Prostate gland (tissue), 2 donors: ENCODE measurements at regions of chr19 and their contacts with region 1.

Region 1: GRCh38 chr19:56121180-56122167 is at the start of gene ZNF787:
- DNase-seq: peak; percentile 98
- H3K4me3 ChIP-seq: peak within 1 kb of the TSS; percentile 69 to 95
- H3K27ac ChIP-seq: peak within 1 kb of the TSS; percentile 92 to 97
- H3K4me1 ChIP-seq: peaks cover 10% of the 10 kb centered on the region
- H3K27me3 ChIP-seq: no peaks in the 10 kb centered on the region
- CTCF ChIP-seq: peak in 2 of 4 experiments; percentile 23 to 32
- POLR2A ChIP-seq: peak; percentile 51
- total RNA-seq, gene ZNF787: 28.2 to 47.5 TPM

Region 2: GRCh38 chr19:55877211-55877610 is 244.3 kb before region 1 on chr19:
- intact Hi-C with region 1: no loop called
- DNase-seq: no peak
- H3K4me3 ChIP-seq: no peak overlapping the region
- H3K27ac ChIP-seq: no peak overlapping the region
- H3K4me1 ChIP-seq: no peaks in the 10 kb centered on the region
- H3K27me3 ChIP-seq: no peaks in the 10 kb centered on the region
- CTCF ChIP-seq: no peak
- POLR2A ChIP-seq: no peak

Region 3: DNA sequence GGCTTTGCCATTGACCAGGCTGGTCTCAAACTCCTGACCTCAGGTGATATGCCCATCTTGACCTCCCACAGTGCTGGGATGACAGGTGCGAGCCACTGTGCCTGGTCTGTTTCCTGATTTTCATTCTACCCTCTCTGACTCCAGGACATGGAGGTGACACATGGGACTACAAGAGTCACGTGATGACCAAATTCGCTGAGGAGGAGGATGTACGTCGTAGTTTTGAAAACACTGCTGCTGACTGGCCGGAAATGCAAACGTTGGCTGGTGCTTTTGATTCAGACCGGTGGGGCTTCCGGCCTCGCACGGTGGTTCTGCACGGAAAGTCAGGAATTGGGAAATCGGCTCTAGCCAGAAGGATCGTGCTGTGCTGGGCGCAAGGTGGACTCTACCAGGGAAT is 94.7 kb before region 1 on chr19:
- intact Hi-C with region 1: no loop called
- DNase-seq: no peak
- H3K4me3 ChIP-seq: no peak overlapping the region
- H3K27ac ChIP-seq: no peak overlapping the region
- H3K4me1 ChIP-seq: no peaks in the 10 kb centered on the region
- H3K27me3 ChIP-seq: no peaks in the 10 kb centered on the region
- CTCF ChIP-seq: no peak
- POLR2A ChIP-seq: no peak

Region 4: DNA sequence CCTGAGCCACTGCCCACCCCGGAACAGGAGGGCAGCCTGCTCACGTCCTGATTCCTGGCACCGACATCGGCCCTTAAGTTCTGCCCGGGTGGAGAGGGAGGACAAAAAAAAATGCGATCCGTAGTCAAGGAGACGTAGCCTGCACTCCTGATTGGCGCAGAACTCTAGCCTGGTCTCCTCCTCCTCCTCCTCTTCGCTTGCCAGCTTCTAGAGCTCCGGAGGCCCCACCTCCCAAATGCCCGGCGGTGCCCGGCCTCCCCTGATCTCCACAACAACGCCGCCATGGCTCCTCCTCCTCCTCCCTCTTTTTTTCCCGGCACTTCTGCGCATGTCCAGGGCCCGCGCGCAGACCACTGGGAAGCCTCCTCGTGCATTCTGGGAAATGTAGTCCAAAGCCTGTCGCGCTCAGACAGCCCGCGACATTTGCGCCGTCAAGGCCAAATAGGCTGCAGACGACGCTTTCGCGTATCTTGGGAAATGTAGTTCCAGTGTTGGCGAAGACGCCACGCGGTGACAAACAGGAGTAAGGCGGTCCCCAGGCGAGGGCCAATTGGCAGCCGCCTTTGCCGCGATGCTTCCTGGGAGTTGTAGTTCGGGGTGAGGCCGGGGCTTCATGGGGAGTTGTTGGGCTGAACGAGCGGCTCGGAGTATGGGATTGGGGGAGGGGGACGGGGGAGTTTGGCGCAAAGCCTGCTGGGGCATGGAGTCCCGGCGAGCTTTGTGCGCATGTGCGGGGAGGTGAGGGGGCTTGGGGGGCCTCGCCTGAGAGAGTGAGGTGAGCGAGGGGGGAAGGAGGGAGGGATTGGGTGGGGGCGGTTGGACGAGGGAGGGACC is 19.3 kb after region 1 on chr19 and contains the start of gene ZNF444:
- intact Hi-C with region 1: loop called (anchors 2 kb)
- DNase-seq: peak; percentile 99
- H3K4me3 ChIP-seq: peak within 1 kb of the TSS; percentile 39 to 57
- H3K27ac ChIP-seq: peak within 1 kb of the TSS; percentile 91 to 96
- H3K4me1 ChIP-seq: peaks cover 22% of the 10 kb centered on the region
- H3K27me3 ChIP-seq: no peaks in the 10 kb centered on the region
- CTCF ChIP-seq: peak in 2 of 4 experiments; percentile 15 to 18
- POLR2A ChIP-seq: peak; percentile 65
- total RNA-seq, gene ZNF444: 62.0 to 105 TPM

Region 5: DNA sequence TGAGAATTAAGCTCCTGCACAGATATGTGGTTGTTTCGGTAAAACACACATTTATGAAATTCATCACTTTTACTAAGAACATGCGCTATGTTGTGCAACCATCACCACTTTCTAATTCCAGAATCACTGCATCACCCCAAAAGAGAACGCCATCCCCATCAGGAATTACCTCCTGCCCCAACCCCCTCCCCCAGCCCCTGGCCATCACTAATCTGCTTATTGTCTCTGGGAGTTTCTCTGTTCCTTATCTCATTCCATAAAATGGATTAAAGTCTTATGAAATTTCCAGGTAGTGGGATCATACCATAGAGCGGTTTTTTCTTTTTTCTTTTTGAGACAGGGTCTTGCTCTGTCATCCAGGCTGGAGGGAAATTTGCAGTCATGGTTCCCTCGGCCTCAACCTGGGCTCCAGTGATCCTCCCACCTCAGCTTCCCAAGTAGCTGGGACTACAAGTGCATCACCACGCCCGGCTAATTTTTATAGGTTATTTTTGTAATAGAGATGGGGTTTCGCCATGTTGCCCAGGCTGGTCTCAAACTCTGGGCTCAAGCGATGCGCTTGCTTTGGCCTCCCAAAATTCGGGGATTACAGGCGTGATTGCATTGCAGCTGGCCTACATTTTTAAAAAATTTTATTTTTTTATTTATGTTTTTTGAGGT is 72.6 kb after region 1 on chr19:
- intact Hi-C with region 1: no loop called
- DNase-seq: no peak
- H3K4me3 ChIP-seq: no peak overlapping the region
- H3K27ac ChIP-seq: no peak overlapping the region
- H3K4me1 ChIP-seq: no peaks in the 10 kb centered on the region
- H3K27me3 ChIP-seq: no peaks in the 10 kb centered on the region
- CTCF ChIP-seq: no peak
- POLR2A ChIP-seq: no peak

Region 6: GRCh38 chr19:56301182-56301581 is 179.7 kb after region 1 on chr19:
- intact Hi-C with region 1: no loop called
- DNase-seq: no peak
- H3K4me3 ChIP-seq: no peak overlapping the region
- H3K27ac ChIP-seq: no peak overlapping the region
- H3K4me1 ChIP-seq: no peaks in the 10 kb centered on the region
- H3K27me3 ChIP-seq: no peaks in the 10 kb centered on the region
- CTCF ChIP-seq: no peak
- POLR2A ChIP-seq: no peak